Activated B cell treated with CpG ODN at 0.5 μM for 24 hours (primary cell): ENCODE measurements at regions of chr10 and their contacts with region 1.

Region 1: DNA sequence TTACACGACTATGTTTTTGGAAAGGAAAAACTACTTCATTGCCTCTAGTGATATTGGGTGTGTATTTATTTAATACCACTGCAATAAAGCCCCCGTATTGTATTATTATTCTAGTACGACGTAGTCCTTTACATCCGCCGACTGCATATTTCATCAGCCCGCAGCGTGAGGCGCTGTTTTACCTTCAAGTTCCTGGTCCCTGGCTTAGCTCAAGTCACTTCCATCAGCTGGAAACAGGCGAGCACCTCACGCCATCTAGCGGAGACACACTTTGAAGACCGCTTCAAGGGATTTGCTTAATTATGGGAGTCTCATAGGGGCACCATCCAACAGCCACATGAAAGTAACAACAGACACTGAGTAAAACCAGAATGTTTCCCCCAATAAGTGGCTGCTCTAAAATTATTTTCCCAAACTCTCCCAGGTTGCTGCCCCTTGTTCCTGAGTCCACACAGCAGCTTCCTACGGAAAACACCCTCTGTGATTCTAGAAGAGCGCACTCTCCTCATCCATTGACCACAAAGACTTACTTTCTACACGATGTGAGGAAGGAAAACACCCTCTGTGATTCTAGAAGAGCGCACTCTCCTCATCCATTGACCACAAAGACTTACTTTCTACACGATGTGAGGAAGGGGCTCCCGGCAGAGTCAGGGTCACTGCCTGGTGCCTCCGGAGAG is 15.7 kb upstream of the ITIH2 start:
- DNase-seq: peak; percentile 43
- ATAC-seq: peak; percentile 89
- H3K4me3 Mint-ChIP-seq: no peak overlapping the region
- H3K27ac Mint-ChIP-seq: no peak overlapping the region
- H3K4me1 Mint-ChIP-seq: peaks cover 4% of the 10 kb centered on the region
- H3K27me3 Mint-ChIP-seq: peaks cover 23% of the 10 kb centered on the region
- CTCF ChIP-seq: peak; percentile 35

Region 2: GRCh38 chr10:6416892-6417512 is 1270.4 kb before region 1 on chr10:
- CTCF ChIA-PET with region 1: no interaction called
- POLR2A ChIA-PET with region 1: no interaction called
- intact Hi-C with region 1: loop called (anchors 1 kb)
- DNase-seq: no peak
- ATAC-seq: peak; percentile 58
- H3K4me3 Mint-ChIP-seq: no peak overlapping the region
- H3K27ac Mint-ChIP-seq: no peak overlapping the region
- H3K4me1 Mint-ChIP-seq: no peaks in the 10 kb centered on the region
- H3K27me3 Mint-ChIP-seq: peaks cover 4% of the 10 kb centered on the region
- CTCF ChIP-seq: peak; percentile 25

Region 3: GRCh38 chr10:6843481-6843881 is 843.9 kb before region 1 on chr10:
- CTCF ChIA-PET with region 1: interaction called, 5 read pairs
- POLR2A ChIA-PET with region 1: no interaction called
- intact Hi-C with region 1: loop called (anchors 10 kb)
- DNase-seq: no peak
- ATAC-seq: no peak
- H3K4me3 Mint-ChIP-seq: no peak overlapping the region
- H3K27ac Mint-ChIP-seq: no peak overlapping the region
- H3K4me1 Mint-ChIP-seq: no peaks in the 10 kb centered on the region
- H3K27me3 Mint-ChIP-seq: peaks cover 11% of the 10 kb centered on the region
- CTCF ChIP-seq: no peak

Region 4: GRCh38 chr10:7121154-7121810 is 566.1 kb before region 1 on chr10:
- CTCF ChIA-PET with region 1: interaction called, 10 read pairs
- POLR2A ChIA-PET with region 1: no interaction called
- intact Hi-C with region 1: loop called (anchors 1 kb)
- DNase-seq: peak; percentile 43
- ATAC-seq: peak; percentile 85
- H3K4me3 Mint-ChIP-seq: no peak overlapping the region
- H3K27ac Mint-ChIP-seq: no peak overlapping the region
- H3K4me1 Mint-ChIP-seq: peaks cover 6% of the 10 kb centered on the region
- H3K27me3 Mint-ChIP-seq: peaks cover 3% of the 10 kb centered on the region
- CTCF ChIP-seq: peak; percentile 42

Region 5: DNA sequence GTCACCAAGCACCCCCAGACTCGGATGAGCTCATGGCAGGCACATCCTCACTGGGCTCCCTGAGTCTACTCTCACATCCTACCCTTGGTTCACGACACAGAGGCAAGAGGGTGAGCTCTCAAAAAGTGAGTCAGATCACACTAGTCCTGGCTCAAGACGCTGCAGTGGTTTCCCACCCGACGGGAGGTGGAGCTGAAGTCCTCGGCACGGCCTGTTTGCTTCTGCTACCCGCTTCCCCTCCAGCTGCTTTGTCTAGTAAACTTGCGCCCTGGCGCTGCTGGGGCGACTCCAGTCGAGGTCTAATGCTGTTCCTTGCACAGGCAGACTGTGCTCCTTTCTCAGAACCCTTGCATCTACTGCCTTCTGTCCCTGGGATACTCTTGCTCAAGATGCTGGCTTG is 263.1 kb before region 1 on chr10:
- CTCF ChIA-PET with region 1: interaction called, 7 read pairs
- POLR2A ChIA-PET with region 1: no interaction called
- intact Hi-C with region 1: loop called (anchors 1 kb)
- DNase-seq: no peak
- ATAC-seq: peak; percentile 54
- H3K4me3 Mint-ChIP-seq: no peak overlapping the region
- H3K27ac Mint-ChIP-seq: no peak overlapping the region
- H3K4me1 Mint-ChIP-seq: peaks cover 4% of the 10 kb centered on the region
- H3K27me3 Mint-ChIP-seq: no peaks in the 10 kb centered on the region
- CTCF ChIP-seq: no peak

Region 6: GRCh38 chr10:7525314-7526016 is 161.9 kb before region 1 on chr10:
- CTCF ChIA-PET with region 1: interaction called, 86 read pairs
- POLR2A ChIA-PET with region 1: no interaction called
- intact Hi-C with region 1: loop called (anchors 1 kb)
- DNase-seq: no peak
- ATAC-seq: peak; percentile 82
- H3K4me3 Mint-ChIP-seq: no peak overlapping the region
- H3K27ac Mint-ChIP-seq: no peak overlapping the region
- H3K4me1 Mint-ChIP-seq: peaks cover 14% of the 10 kb centered on the region
- H3K27me3 Mint-ChIP-seq: peaks cover 4% of the 10 kb centered on the region
- CTCF ChIP-seq: no peak

Region 7: GRCh38 chr10:7649673-7650300 is 37.6 kb before region 1 on chr10:
- CTCF ChIA-PET with region 1: no interaction called
- POLR2A ChIA-PET with region 1: no interaction called
- intact Hi-C with region 1: no loop called
- DNase-seq: no peak
- ATAC-seq: no peak
- H3K4me3 Mint-ChIP-seq: no peak overlapping the region
- H3K27ac Mint-ChIP-seq: no peak overlapping the region
- H3K4me1 Mint-ChIP-seq: no peaks in the 10 kb centered on the region
- H3K27me3 Mint-ChIP-seq: peaks cover 20% of the 10 kb centered on the region
- CTCF ChIP-seq: no peak

Region 8: DNA sequence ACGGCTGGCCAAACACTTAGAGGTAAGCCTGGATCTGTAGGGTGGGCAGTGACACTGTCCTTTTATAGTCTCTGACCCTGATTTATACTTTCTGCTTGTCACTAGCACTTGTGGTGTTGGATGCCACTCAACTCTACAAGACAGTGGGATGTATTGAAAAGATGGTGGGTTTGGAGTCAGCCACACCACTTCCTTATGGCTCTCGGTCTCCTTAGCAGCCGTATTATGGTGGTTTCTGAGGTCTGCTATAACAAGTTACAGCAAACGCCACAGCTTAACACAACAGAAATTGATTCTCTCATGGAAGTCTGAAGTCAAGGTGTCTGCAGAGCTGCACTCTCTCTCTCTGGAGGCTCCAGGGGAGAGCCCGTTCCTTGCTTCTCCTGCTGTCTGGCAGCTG is 30.4 kb after region 1 on chr10:
- CTCF ChIA-PET with region 1: no interaction called
- POLR2A ChIA-PET with region 1: no interaction called
- intact Hi-C with region 1: no loop called
- DNase-seq: no peak
- ATAC-seq: no peak
- H3K4me3 Mint-ChIP-seq: no peak overlapping the region
- H3K27ac Mint-ChIP-seq: no peak overlapping the region
- H3K4me1 Mint-ChIP-seq: no peaks in the 10 kb centered on the region
- H3K27me3 Mint-ChIP-seq: peaks cover 8% of the 10 kb centered on the region
- CTCF ChIP-seq: no peak

Region 9: DNA sequence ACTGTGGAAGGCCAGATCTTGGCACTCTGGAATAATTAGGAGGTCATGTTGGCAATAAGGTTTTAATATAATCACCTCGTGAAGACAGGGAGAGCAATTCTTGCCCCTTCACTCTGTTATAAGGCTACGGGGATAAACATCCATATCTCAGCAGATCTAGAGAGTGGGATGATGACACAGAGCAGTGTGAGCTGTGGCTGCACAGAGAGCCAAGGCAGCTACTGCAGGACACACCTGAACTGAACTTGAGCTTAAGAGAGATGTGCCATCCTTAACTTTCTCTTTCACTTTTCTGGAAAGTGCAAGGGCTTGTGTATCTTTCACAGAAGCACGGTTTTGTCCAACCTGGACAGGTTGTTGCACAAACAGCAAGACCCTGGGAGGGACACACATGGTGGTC is 541.8 kb after region 1 on chr10:
- CTCF ChIA-PET with region 1: no interaction called
- POLR2A ChIA-PET with region 1: no interaction called
- intact Hi-C with region 1: no loop called
- DNase-seq: no peak
- ATAC-seq: no peak
- H3K4me3 Mint-ChIP-seq: no peak overlapping the region
- H3K27ac Mint-ChIP-seq: no peak overlapping the region
- H3K4me1 Mint-ChIP-seq: no peaks in the 10 kb centered on the region
- H3K27me3 Mint-ChIP-seq: no peaks in the 10 kb centered on the region
- CTCF ChIP-seq: no peak

Region 10: GRCh38 chr10:9302120-9302746 is 1614.9 kb after region 1 on chr10:
- CTCF ChIA-PET with region 1: no interaction called
- POLR2A ChIA-PET with region 1: no interaction called
- intact Hi-C with region 1: loop called (anchors 5 kb)
- DNase-seq: no peak
- ATAC-seq: no peak
- H3K4me3 Mint-ChIP-seq: no peak overlapping the region
- H3K27ac Mint-ChIP-seq: no peak overlapping the region
- H3K4me1 Mint-ChIP-seq: no peaks in the 10 kb centered on the region
- H3K27me3 Mint-ChIP-seq: peaks cover 8% of the 10 kb centered on the region
- CTCF ChIP-seq: peak; percentile 33